Activated naive CD4-positive, alpha-beta T cell treated with anti-CD3 and anti-CD28 coated beads for 36 hours (primary cell): ENCODE measurements at regions of chr12 and their contacts with region 1.

Region 1: GRCh38 chr12:68807576-68808387 is at the start of gene MDM2:
- DNase-seq: peak; percentile 95
- H3K4me3 Mint-ChIP-seq: peak within 1 kb of the TSS; percentile 97
- H3K27ac Mint-ChIP-seq: peak within 1 kb of the TSS; percentile 98
- H3K4me1 Mint-ChIP-seq: peaks cover 24% of the 10 kb centered on the region
- H3K27me3 Mint-ChIP-seq: no peaks in the 10 kb centered on the region
- total RNA-seq, gene MDM2: 165 to 166 TPM

Region 2: GRCh38 chr12:67804168-67804567 is 1003.6 kb before region 1 on chr12:
- CTCF ChIA-PET with region 1: no interaction called
- intact Hi-C with region 1: no loop called
- DNase-seq: peak; percentile 73
- H3K4me3 Mint-ChIP-seq: no peak overlapping the region
- H3K27ac Mint-ChIP-seq: no peak overlapping the region
- H3K4me1 Mint-ChIP-seq: peaks cover 14% of the 10 kb centered on the region
- H3K27me3 Mint-ChIP-seq: no peaks in the 10 kb centered on the region

Region 3: DNA sequence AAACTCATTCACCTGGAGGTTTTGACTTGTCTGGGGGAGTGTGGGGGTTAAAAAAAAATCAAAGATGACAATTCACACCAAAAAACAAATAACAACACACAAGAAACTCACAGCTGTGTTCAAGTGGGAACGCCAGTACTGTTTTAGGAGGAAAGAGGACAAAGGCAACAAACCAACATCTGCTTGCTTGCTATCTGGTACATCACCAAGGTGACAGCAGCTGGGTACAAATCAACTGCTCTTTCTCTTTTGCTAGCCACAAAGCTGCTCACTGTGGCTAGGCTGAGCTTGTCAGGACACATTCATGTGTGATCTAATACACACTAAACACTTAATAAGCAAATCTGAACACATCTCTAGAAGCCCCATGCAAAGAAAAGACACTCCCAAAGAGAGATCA is 325.1 kb before region 1 on chr12:
- CTCF ChIA-PET with region 1: no interaction called
- intact Hi-C with region 1: loop called (anchors 5 kb)
- DNase-seq: peak; percentile 28
- H3K4me3 Mint-ChIP-seq: no peak overlapping the region
- H3K27ac Mint-ChIP-seq: peak overlapping the region; percentile 42
- H3K4me1 Mint-ChIP-seq: peaks cover 37% of the 10 kb centered on the region
- H3K27me3 Mint-ChIP-seq: no peaks in the 10 kb centered on the region

Region 4: DNA sequence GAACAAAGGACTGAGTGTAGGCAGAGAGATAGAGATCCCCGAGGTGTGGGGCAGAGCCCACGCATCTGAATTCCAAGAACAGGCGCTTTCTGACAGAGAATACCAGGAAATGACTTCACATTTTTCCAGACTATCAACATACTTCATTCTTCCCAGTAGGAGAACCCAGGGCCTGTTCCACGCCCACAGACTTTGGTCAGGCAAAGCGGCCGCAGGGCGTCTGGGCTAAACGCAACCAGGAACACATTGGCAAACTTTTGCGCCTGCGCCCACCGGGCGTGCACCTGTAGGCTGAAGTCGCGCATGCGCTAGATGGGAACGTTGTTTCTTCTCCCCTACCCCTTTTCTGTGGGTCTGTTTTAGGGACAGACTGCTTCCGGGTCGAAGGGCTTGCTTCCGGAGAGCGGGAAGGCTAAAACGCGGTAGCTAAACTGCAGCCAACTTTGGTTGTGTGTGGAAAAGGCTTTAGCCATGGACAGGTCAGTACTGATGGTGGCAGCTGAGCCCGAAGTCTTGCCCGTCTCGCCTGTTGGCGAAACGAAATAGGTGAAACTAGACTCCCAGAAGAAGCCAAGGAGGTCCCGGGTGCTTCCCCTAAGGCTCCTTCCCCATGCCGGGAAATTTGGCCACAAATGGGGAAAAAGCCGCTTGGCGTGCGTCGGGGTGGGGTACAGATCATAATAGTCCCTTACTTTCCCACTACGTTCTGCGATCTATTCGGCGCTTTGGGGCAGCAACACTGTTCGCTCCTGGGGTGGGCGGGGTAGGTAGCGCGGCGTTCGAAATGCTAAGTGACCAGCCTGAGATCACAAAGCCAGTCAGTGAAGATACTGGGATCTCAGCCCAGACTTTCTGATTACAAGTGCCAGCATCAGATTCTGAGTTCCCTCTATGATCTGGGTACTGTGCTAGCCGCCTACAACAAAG is 120.9 kb before region 1 on chr12 and contains the start of gene NUP107:
- CTCF ChIA-PET with region 1: no interaction called
- intact Hi-C with region 1: loop called (anchors 1 kb)
- DNase-seq: peak; percentile 98
- H3K4me3 Mint-ChIP-seq: peak within 1 kb of the TSS; percentile 98
- H3K27ac Mint-ChIP-seq: peak within 1 kb of the TSS; percentile 96
- H3K4me1 Mint-ChIP-seq: peaks cover 39% of the 10 kb centered on the region
- H3K27me3 Mint-ChIP-seq: no peaks in the 10 kb centered on the region
- total RNA-seq, gene NUP107: 126 to 135 TPM

Region 5: GRCh38 chr12:68825569-68826217 is 17.9 kb after region 1 on chr12:
- CTCF ChIA-PET with region 1: interaction called, 27 read pairs
- intact Hi-C with region 1: loop called (anchors 1 kb)
- DNase-seq: no peak
- H3K4me3 Mint-ChIP-seq: no peak overlapping the region
- H3K27ac Mint-ChIP-seq: peak overlapping the region; percentile 20
- H3K4me1 Mint-ChIP-seq: peaks cover 43% of the 10 kb centered on the region
- H3K27me3 Mint-ChIP-seq: no peaks in the 10 kb centered on the region

Region 6: DNA sequence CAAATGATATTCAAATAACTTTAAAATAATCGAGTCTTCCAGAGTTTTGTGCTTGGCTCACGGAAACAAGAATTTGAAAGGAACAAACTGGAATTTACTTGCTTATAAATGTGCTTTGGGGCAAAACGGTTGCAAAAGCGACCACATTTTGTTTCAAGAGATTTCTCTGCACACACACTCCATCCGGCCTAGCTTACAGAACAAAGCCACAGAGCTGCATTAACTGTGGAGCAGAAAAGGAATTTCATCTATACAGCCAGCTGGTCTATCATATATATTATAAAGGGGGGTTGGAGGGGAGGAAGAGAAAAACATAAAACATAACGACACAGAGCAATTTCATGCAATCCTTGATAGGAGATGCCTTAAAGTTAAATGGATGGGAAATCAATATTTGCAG is 1170.2 kb after region 1 on chr12:
- CTCF ChIA-PET with region 1: no interaction called
- intact Hi-C with region 1: no loop called
- DNase-seq: no peak
- H3K4me3 Mint-ChIP-seq: no peak overlapping the region
- H3K27ac Mint-ChIP-seq: no peak overlapping the region
- H3K4me1 Mint-ChIP-seq: no peaks in the 10 kb centered on the region
- H3K27me3 Mint-ChIP-seq: peaks cover 7% of the 10 kb centered on the region